ENCODE measurements at regions of chr12 and their contacts with region 1.

Region 1: DNA sequence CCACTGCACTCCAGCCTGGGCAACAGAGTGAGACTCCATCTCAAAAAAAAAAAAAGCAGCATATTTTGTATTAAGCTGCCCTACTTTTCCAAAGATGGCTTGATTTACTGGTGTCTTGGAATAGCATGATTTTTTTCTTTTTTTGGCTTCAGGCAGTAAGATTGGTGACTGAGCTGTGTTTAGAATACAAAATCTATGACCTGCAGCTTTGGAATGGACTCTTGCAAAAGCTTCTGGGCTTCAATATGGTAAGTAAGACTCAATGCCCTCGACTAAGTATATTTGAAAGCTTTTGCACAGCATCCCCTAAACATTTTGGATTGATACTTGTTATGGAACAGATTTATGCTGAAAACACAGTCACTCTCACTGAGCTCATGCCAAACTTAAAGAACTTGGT is 87.8 kb downstream of the KNTC1 start:
- DNase-seq: no peak
- H3K4me3 ChIP-seq: no peak overlapping the region
- CTCF ChIP-seq: no peak

Region 2: DNA sequence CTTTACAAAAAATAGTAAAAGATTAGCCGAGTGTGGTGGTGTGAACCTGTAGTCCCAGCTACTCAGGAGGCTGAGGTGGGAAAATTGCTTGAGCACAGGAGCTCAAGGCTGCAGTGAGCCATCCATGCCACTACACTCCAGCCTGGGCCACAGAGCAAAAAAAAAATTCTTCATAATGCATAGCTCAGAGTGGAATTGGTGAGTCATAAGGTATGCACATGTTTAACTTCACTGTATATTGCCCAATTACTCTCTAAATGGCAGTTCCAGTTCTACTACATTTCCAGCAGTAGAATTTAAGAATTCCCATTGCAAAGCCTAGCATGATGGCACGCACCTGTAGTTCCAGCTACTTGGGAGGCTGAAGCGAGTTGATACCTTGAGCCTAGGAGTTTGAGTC is 165.5 kb before region 1 on chr12:
- in situ Hi-C with region 1: no loop called
- DNase-seq: peak; percentile 29
- H3K4me3 ChIP-seq: no peak overlapping the region
- CTCF ChIP-seq: no peak

Region 3: DNA sequence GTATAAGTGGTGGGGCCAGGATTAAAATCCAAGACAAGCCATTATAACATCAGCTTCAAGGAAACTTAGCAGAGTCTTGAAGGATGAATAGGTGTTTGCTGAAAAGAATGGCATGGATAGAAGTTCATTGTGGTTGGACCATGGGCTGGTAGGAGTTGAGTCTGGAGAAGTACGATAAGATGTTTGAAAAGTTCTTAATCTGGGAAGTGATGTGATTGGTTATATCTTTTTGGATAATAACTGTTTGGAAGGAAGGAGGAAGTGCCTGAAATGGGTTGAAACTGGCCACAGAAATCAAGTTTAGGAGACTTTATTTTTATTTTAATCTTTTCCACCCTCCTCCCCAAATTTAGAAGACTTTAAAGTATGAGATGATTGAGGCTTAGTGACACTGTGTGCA is 142.7 kb after region 1 on chr12:
- in situ Hi-C with region 1: loop called (anchors 5 kb)
- DNase-seq: no peak
- H3K4me3 ChIP-seq: no peak overlapping the region
- CTCF ChIP-seq: no peak